A549 (cell line): ENCODE measurements at regions of chr10 and their contacts with region 1.

Region 1: DNA sequence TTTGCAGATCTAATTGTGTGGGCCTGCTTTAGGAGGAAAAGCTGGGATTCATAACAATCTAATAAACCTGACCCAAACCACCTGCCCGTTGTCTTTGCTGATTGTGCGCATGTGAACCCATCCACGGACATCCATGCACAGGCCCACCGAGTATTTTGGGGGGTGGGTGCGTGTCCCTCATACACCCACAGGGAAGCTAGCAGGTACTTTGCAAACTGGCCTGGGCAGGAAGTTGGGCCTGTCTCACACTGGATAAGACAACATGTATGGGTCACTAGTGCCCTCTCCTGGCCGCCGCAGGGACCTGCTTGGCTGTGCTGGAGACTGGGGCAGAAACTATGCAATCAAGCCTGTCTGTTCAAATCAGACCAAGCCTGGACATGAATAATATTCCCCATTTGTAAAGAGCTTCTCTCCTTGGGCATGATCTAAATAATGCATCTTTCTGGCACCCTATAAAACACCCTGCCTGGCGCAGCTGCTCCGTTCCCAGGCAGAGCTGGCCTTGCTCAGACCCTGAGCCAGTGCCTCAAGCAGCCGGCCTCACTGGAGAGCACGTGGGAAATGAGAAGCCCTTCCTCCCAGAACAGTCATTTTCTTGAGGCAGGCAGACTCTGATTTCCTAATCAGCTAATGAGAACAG is 15.8 kb downstream of the ECHDC3 start:
- DNase-seq: peak; percentile 84 to 87
- ATAC-seq: peak; percentile 95 to 99
- H3K4me3 ChIP-seq: no peak overlapping the region
- H3K27ac ChIP-seq: 0 out of 6 replicates have a peak overlapping the region, but pooled peaks of 1 of the 2 experiments have one; percentile 11
- H3K4me1 ChIP-seq: no peaks in the 10 kb centered on the region
- CTCF ChIP-seq: peak; percentile 92
- EP300 ChIP-seq: no peak
- POLR2A ChIP-seq: no peak
- RAD21 ChIP-seq: peak; percentile 93 to 96

Region 2: DNA sequence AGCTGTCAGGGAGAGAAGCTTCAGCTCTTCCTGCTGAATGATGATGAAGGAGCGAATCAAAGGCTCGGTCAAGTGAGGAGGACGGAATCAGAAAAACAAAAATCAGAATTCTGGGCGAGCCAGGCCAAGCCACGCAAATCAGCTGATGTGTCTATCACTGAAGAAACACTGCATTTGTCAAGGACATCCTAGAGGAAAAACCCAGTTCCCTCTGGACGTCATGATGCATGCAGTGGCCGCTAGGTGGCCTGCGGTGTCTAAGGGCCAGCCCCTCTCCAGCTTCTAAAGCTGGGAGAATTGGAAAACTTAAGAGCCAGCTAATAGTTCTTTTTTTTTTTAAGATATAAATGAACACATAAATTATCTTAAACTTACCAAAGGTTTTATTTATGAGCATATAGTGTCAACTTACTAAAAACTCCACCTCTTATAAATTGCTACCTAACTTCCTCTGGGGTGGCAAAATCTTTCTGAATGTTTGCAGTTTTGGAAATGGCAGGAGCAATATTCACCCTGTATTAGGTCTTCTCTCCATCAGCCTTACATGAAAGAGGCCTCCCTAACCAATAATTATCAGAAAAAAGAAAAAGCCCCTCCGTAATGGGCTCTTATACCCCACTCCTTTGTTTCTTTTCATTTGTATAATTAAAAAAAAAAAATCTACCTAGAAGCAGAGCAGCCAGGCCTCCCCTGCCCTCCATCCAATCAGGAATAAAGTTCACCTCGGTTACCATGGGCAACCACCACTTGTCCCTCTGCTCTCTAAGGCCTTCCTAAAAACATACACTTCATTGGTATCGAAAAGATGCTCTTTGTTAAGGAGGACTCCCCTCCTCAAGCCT is 333.3 kb before region 1 on chr10:
- CTCF ChIA-PET with region 1: interaction called, 23 read pairs
- POLR2A ChIA-PET with region 1: no interaction called
- DNase-seq: peak; percentile 54 to 74
- ATAC-seq: peak; percentile 92 to 98
- H3K4me3 ChIP-seq: no peak overlapping the region
- H3K27ac ChIP-seq: no peak overlapping the region
- H3K4me1 ChIP-seq: no peaks in the 10 kb centered on the region
- CTCF ChIP-seq: peak; percentile 74
- EP300 ChIP-seq: no peak
- POLR2A ChIP-seq: no peak
- RAD21 ChIP-seq: peak; percentile 50 to 61; a peak in 4 of 5 replicates

Region 3: GRCh38 chr10:11505639-11506038 is 252.3 kb before region 1 on chr10:
- CTCF ChIA-PET with region 1: interaction called, 12 read pairs
- POLR2A ChIA-PET with region 1: no interaction called
- DNase-seq: no peak
- ATAC-seq: no peak
- H3K4me3 ChIP-seq: no peak overlapping the region
- H3K27ac ChIP-seq: no peak overlapping the region
- H3K4me1 ChIP-seq: no peaks in the 10 kb centered on the region
- CTCF ChIP-seq: no peak
- EP300 ChIP-seq: no peak
- POLR2A ChIP-seq: no peak
- RAD21 ChIP-seq: no peak

Region 4: DNA sequence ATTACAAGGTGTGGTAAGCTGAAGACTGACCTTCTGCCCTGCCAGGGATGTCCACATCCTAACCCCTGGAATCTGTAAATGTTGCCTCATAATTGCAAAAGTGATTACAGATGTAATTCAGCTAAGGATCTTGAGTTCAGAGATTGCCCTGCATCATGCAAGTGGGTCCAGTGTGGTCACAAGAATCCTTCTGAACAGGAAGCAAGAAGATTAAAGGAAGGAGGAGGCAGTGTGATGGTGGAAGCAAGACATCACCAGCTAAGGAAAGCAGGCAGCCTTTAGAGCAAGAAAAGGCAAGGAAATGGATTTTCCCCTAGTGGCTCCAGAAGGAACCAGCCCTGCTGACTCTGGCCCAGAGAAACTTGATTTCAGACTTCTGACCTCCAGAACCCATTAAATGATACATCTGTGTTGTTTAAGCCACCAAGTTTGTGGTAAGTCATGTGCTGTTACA is 224.6 kb before region 1 on chr10:
- CTCF ChIA-PET with region 1: interaction called, 11 read pairs
- POLR2A ChIA-PET with region 1: no interaction called
- DNase-seq: peak in 1 of 2 experiments; percentile 30
- ATAC-seq: peak; percentile 91 to 95
- H3K4me3 ChIP-seq: no peak overlapping the region
- H3K27ac ChIP-seq: no peak overlapping the region
- H3K4me1 ChIP-seq: 0 out of 3 replicates have a peak, but pooled peaks cover 3% of the 10 kb centered on the region
- CTCF ChIP-seq: no peak
- EP300 ChIP-seq: no peak
- POLR2A ChIP-seq: no peak
- RAD21 ChIP-seq: no peak

Region 5: GRCh38 chr10:11684717-11685645 is 73.0 kb before region 1 on chr10:
- CTCF ChIA-PET with region 1: interaction called, 10 read pairs
- POLR2A ChIA-PET with region 1: no interaction called
- DNase-seq: peak; percentile 74 to 89
- ATAC-seq: peak; percentile 81 to 89
- H3K4me3 ChIP-seq: peak overlapping the region; percentile 31
- H3K27ac ChIP-seq: peak overlapping the region; percentile 60 to 80
- H3K4me1 ChIP-seq: peaks cover 16% of the 10 kb centered on the region
- CTCF ChIP-seq: no peak
- EP300 ChIP-seq: no peak
- POLR2A ChIP-seq: no peak
- RAD21 ChIP-seq: no peak

Region 6: GRCh38 chr10:11742005-11742778 is 15.8 kb before region 1 on chr10 and contains the start of gene ECHDC3:
- CTCF ChIA-PET with region 1: interaction called, 34 read pairs
- POLR2A ChIA-PET with region 1: no interaction called
- DNase-seq: peak; percentile 21 to 45
- ATAC-seq: peak; percentile 76 to 77
- H3K4me3 ChIP-seq: peak within 1 kb of the TSS; percentile 51
- H3K27ac ChIP-seq: peak within 1 kb of the TSS; percentile 53 to 86
- H3K4me1 ChIP-seq: 0 out of 3 replicates have a peak, but pooled peaks cover 4% of the 10 kb centered on the region
- CTCF ChIP-seq: no peak
- EP300 ChIP-seq: no peak
- POLR2A ChIP-seq: no peak
- RAD21 ChIP-seq: no peak
- polyA plus RNA-seq, gene ECHDC3: 6.0 and 7.9 TPM in 2 replicates

Region 7: GRCh38 chr10:11782793-11783557 is 25.0 kb after region 1 on chr10:
- CTCF ChIA-PET with region 1: interaction called, 22 read pairs
- POLR2A ChIA-PET with region 1: interaction called, 4 read pairs
- DNase-seq: peak; percentile 63 to 72
- ATAC-seq: peak; percentile 70 to 85; a peak in 5 of 6 replicates
- H3K4me3 ChIP-seq: no peak overlapping the region
- H3K27ac ChIP-seq: no peak overlapping the region
- H3K4me1 ChIP-seq: no peaks in the 10 kb centered on the region
- CTCF ChIP-seq: peak; percentile 85
- EP300 ChIP-seq: no peak
- POLR2A ChIP-seq: no peak
- RAD21 ChIP-seq: peak; percentile 77 to 79

Region 8: DNA sequence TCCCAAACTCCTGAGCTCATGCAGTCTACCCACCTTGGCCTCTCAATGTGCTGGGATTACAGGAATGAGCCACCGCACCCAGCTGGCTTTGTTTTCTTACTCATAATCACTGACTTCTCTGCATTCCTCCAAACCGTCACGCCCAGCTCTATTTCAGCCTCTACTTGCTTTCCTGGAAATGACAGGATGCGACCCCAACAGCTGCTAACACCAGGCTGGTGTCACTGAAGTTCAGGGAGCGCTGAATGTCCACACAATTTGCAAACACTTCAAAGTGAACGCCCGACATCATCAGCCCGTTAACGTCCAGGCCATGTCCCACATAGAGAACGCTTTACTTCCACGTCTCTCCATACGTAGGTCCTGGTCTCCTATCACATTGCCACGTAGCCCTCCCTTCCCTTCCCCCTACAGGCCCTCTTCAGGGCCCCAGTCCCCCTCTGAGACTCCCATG is 52.4 kb after region 1 on chr10:
- CTCF ChIA-PET with region 1: no interaction called
- POLR2A ChIA-PET with region 1: no interaction called
- DNase-seq: peak in 1 of 2 experiments; percentile 56
- ATAC-seq: peak; percentile 35 to 77; a peak in 3 of 6 replicates
- H3K4me3 ChIP-seq: no peak overlapping the region
- H3K27ac ChIP-seq: peak overlapping the region in 1 of 2 experiments; percentile 44; a peak in 1 of 6 replicates
- H3K4me1 ChIP-seq: peaks cover 12% of the 10 kb centered on the region
- CTCF ChIP-seq: no peak
- EP300 ChIP-seq: no peak
- POLR2A ChIP-seq: no peak
- RAD21 ChIP-seq: no peak

Region 9: DNA sequence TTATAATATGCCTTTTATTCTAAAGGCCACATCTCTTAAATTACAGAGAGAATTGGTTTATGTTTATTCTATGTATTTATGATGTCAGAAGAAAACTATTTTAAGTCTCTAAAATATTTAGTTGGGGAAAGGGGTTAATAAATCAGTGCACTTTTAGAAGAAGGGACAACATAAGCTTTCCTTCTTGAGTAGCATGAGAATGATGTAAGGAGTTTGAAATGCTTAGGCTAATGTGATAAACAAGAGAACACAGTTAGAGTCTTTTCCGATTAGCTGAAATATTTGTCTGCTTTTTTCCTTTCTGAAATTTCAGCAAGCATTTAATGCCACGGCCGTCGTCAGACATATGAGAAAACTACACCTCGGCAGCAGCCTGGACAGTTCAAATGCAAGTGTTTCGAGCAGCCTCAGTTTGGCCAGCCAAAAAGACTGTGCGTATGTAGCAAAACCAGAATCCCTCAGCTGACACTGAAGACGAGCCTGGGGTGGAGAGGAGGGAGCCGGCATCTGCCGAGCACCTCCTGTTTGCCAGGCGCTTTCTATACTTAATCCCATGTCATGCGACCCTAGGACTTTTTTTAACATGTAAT is 1067.4 kb after region 1 on chr10:
- CTCF ChIA-PET with region 1: no interaction called
- POLR2A ChIA-PET with region 1: no interaction called
- DNase-seq: no peak
- ATAC-seq: no peak
- H3K4me3 ChIP-seq: no peak overlapping the region
- H3K27ac ChIP-seq: no peak overlapping the region
- H3K4me1 ChIP-seq: no peaks in the 10 kb centered on the region
- CTCF ChIP-seq: no peak
- EP300 ChIP-seq: no peak
- POLR2A ChIP-seq: no peak
- RAD21 ChIP-seq: no peak